ENCODE measurements at regions of chr1 and their contacts with region 1.

Region 1: DNA sequence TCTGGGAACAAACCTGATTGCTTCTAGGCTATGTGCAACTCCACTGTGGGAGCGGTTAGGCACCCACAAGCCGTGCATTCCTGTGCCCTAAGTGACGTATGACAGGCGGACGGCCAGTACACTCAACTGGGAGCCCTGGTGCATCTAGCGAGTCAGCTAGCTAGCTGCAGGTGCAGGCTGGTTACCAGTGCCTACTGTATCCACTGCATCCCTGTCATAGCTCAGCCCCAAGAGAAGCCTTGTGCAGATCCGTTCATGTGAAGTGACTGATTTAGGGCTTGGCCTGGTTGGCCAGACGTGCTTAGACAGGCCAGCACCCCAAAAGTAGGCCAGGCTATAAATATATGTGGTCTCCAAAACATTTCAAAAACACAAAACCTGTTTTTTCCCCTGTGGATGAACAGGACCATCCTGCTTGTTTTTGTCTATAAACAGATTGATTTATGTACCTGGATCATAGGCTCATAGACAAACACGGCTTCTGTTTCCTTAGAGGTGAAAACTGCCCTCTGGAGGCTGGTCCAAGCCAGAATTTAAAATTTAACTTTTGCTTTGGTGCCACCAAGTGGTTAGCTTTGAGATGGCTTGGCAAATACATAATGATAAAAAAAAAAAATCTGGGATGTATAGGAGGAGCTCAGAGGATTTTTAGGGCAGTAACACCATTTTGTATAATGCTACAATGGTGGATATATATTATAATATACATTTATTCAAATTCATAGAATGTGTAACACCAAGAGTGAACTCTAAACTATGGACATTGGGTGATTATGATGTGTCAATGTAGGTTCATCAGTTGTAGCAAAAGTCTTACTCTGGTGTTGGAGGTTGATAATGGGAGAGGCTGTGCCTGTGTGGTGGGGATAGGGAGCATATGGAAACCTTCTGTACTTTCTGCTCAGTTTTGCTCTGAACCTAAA is 68.5 kb downstream of the GIPC2 start:
- DNase-seq: peak; percentile 62
- ATAC-seq: peak; percentile 88
- H3K4me3 ChIP-seq: no peak overlapping the region
- H3K27ac ChIP-seq: no peak overlapping the region
- H3K4me1 ChIP-seq: no peaks in the 10 kb centered on the region
- H3K27me3 ChIP-seq: no peaks in the 10 kb centered on the region
- CTCF ChIP-seq: peak; percentile 80

Region 2: DNA sequence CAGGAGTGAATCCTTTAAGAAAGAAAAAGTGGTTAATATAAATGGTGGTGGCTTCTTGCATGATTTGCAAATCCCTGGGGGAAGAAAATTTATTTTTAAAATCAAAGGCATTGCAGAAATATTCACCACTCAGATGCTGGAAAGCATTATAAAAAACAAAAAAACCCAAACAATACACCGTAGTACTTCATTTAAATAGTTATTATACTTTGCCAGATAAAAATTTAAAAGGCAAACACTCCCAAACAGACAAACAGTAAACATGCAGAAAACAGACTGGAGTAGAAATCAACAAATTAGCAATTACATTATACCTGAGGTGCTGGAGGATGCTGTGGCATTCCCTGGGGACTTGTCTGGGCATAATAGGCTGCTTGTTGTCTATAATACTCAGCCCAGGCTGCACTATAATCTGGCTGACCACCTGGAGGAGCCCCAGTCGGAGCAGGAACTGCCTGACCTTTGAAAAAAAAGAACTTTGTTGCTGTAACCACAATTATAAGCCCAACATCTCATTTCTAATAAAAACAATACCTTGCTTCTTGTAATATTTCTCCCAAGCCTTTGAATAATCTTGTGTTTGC is 165.4 kb before region 1 on chr1:
- CTCF ChIA-PET with region 1: no interaction called
- POLR2A ChIA-PET with region 1: interaction called, 3 read pairs
- in situ Hi-C with region 1: no loop called
- intact Hi-C with region 1: loop called (anchors 10 kb)
- DNase-seq: no peak
- ATAC-seq: 0 out of 2 replicates have a peak, but pooled peaks have one; percentile 56
- H3K4me3 ChIP-seq: no peak overlapping the region
- H3K27ac ChIP-seq: no peak overlapping the region
- H3K4me1 ChIP-seq: no peaks in the 10 kb centered on the region
- H3K27me3 ChIP-seq: no peaks in the 10 kb centered on the region
- CTCF ChIP-seq: peak; percentile 33

Region 3: DNA sequence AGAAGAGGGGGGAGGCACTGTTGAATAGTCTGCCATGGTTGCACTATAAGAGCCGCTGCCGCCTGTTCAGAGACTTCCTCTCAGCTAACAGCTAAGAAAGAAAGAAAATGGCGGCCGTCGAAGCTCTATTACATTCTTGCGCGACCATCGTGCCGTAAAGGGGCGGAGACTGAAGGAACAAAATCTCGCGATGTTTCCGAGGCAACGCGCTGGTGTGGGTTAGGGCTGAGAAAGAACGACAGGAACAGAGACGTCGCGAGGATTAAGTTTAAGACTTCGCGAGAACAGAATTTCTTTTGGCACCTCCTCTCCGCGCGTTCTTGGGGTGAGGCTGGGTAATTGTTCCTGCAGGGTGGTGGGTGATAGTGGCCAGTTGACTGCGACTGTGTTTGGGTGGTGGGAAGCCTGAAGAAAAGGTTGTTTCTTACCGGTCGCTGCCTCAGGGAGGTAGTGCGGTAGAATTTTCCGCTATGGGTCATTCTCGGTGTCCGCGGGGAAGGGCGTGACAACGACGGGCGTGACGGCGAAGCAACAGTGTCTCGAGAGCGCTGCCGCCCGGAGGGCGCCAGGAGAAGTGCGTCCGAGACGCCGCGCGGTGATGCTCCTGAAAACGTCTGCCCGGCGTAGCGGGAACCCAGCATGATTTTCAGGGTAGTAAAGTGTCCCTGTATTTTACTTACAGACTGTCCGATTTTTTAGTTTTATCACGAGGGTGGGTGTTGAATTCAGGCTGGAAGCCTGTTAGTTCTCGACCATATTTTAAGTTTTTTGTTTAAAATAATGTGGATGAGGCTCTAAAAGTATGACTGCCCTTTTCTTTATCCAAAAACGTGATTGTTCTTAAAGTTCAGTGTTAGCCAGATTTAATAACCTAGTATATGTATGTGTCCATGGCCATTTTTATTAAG is 135.1 kb before region 1 on chr1 and contains the start of gene FUBP1:
- CTCF ChIA-PET with region 1: interaction called, 6 read pairs
- POLR2A ChIA-PET with region 1: no interaction called
- in situ Hi-C with region 1: no loop called
- intact Hi-C with region 1: loop called (anchors 5 kb)
- DNase-seq: peak; percentile 99
- ATAC-seq: peak; percentile 94
- H3K4me3 ChIP-seq: peak within 1 kb of the TSS; percentile 96 to 100
- H3K27ac ChIP-seq: peak within 1 kb of the TSS; percentile 100
- H3K4me1 ChIP-seq: peaks cover 18% of the 10 kb centered on the region
- H3K27me3 ChIP-seq: no peaks in the 10 kb centered on the region
- CTCF ChIP-seq: peak; percentile 87
- total RNA-seq, gene FUBP1: 150 TPM

Region 4: GRCh38 chr1:78004719-78005447 is 109.4 kb before region 1 on chr1 and contains the start of gene DNAJB4:
- CTCF ChIA-PET with region 1: interaction called, 11 read pairs
- POLR2A ChIA-PET with region 1: no interaction called
- in situ Hi-C with region 1: no loop called
- intact Hi-C with region 1: loop called (anchors 10 kb)
- DNase-seq: peak; percentile 94
- ATAC-seq: peak; percentile 99
- H3K4me3 ChIP-seq: peak within 1 kb of the TSS; percentile 55
- H3K27ac ChIP-seq: peak within 1 kb of the TSS; percentile 96
- H3K4me1 ChIP-seq: peaks cover 24% of the 10 kb centered on the region
- H3K27me3 ChIP-seq: no peaks in the 10 kb centered on the region
- CTCF ChIP-seq: no peak
- total RNA-seq, gene DNAJB4: 14.9 TPM

Region 5: GRCh38 chr1:78176448-78176847 is 62.2 kb after region 1 on chr1:
- CTCF ChIA-PET with region 1: no interaction called
- POLR2A ChIA-PET with region 1: no interaction called
- in situ Hi-C with region 1: no loop called
- intact Hi-C with region 1: no loop called
- DNase-seq: no peak
- ATAC-seq: no peak
- H3K4me3 ChIP-seq: no peak overlapping the region
- H3K27ac ChIP-seq: no peak overlapping the region
- H3K4me1 ChIP-seq: no peaks in the 10 kb centered on the region
- H3K27me3 ChIP-seq: no peaks in the 10 kb centered on the region
- CTCF ChIP-seq: no peak